GM12878 (cell line): ENCODE measurements at regions of chr7 and their contacts with region 1.

Region 1: DNA sequence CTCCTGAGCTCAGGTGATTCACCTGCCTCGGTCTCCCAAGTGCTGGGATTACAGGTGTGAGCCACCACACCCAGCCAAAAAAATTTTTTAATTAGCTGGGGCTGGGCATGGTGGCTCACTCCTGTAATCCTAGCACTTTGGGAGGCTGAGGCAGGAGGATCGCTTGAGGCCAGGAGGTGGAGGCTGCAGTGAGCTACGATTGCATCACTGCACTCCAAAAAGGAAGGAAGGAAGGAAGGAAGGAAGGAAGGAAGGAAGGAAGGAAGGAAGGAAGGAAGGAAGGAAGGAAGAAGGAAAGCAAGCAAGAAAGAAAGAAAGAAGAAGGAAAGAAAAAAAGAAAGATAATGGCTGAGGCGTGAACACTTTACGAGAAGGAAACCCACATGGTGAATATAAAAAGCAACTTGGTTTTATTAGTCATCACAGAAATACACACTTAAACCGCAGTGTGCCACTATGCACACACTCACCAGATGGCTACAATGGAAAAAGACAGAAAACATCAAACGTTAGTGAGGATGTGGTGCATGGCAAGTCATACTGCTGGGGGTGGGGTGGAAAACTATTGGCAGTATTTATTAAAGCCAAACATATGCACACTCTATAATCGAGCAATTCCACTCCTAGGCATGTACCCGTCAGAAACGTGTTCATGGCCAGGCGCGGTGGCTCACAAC is 4.4 kb upstream of the CCL26 start:
- DNase-seq: peak; percentile 55
- ATAC-seq: peak; percentile 66
- H3K4me3 ChIP-seq: no peak overlapping the region
- H3K27ac ChIP-seq: no peak overlapping the region
- H3K4me1 ChIP-seq: no peaks in the 10 kb centered on the region; the same call in 1 of the 2 replicates
- H3K27me3 ChIP-seq: no peaks in the 10 kb centered on the region
- CTCF ChIP-seq: no peak
- EP300 ChIP-seq: peak; percentile 25 to 39; a peak in 2 of 4 replicates
- POLR2A ChIP-seq: no peak
- RAD21 ChIP-seq: peak; percentile 32; the same call in 1 of the 2 replicates

Region 2: GRCh38 chr7:75688200-75689136 is 88.0 kb before region 1 on chr7:
- CTCF ChIA-PET with region 1: no interaction called
- POLR2A ChIA-PET with region 1: no interaction called
- RAD21 ChIA-PET with region 1: no interaction called
- SMC1A ChIA-PET with region 1: no interaction called
- in situ Hi-C with region 1: no loop called
- intact Hi-C with region 1: no loop called
- DNase-seq: no peak
- ATAC-seq: peak; percentile 37; the same call in 2 of the 3 replicates
- H3K4me3 ChIP-seq: no peak overlapping the region
- H3K27ac ChIP-seq: no peak overlapping the region
- H3K4me1 ChIP-seq: peaks cover 14% of the 10 kb centered on the region
- H3K27me3 ChIP-seq: no peaks in the 10 kb centered on the region
- CTCF ChIP-seq: no peak
- EP300 ChIP-seq: no peak
- POLR2A ChIP-seq: no peak
- RAD21 ChIP-seq: no peak

Region 3: DNA sequence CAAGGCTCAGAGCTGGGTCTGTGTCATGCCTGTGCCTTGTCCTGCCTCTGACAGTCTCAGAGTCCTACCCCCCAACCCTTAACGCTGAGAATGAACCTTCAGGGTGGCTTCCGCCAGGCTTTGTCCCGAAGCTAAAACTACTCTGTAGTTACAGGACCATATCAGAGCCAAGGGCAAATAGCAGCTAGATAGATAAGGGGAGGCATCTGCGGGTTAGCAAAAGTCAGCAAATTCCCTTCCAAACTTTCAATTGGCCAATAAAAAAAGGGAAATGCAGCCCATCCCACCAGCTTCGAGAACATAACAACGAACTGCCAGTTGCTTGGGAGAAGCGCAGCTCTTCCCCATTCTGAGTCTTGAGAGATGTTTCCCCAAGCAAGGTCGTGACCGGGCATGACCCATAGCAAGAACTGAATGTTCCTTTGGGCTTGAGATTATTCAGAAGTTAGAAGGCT is 19.4 kb after region 1 on chr7:
- CTCF ChIA-PET with region 1: no interaction called
- POLR2A ChIA-PET with region 1: no interaction called
- RAD21 ChIA-PET with region 1: no interaction called
- SMC1A ChIA-PET with region 1: no interaction called
- in situ Hi-C with region 1: no loop called
- intact Hi-C with region 1: no loop called
- DNase-seq: no peak
- ATAC-seq: no peak
- H3K4me3 ChIP-seq: no peak overlapping the region
- H3K27ac ChIP-seq: no peak overlapping the region
- H3K4me1 ChIP-seq: no peaks in the 10 kb centered on the region
- H3K27me3 ChIP-seq: no peaks in the 10 kb centered on the region
- CTCF ChIP-seq: no peak
- EP300 ChIP-seq: no peak
- POLR2A ChIP-seq: no peak
- RAD21 ChIP-seq: no peak

Region 4: GRCh38 chr7:76011442-76011861 is 235.0 kb after region 1 on chr7:
- CTCF ChIA-PET with region 1: no interaction called
- POLR2A ChIA-PET with region 1: no interaction called
- RAD21 ChIA-PET with region 1: no interaction called
- SMC1A ChIA-PET with region 1: no interaction called
- in situ Hi-C with region 1: no loop called
- intact Hi-C with region 1: loop called (anchors 10 kb)
- DNase-seq: no peak
- ATAC-seq: no peak
- H3K4me3 ChIP-seq: no peak overlapping the region
- H3K27ac ChIP-seq: no peak overlapping the region
- H3K4me1 ChIP-seq: peaks cover 19% of the 10 kb centered on the region
- H3K27me3 ChIP-seq: no peaks in the 10 kb centered on the region
- CTCF ChIP-seq: no peak
- EP300 ChIP-seq: no peak
- POLR2A ChIP-seq: no peak
- RAD21 ChIP-seq: no peak